Naive thymus-derived CD4-positive, alpha-beta T cell (primary cell): ENCODE measurements at regions of chr7 and their contacts with region 1.

Region 1: GRCh38 chr7:105876091-105876963 is at the start of gene ATXN7L1:
- DNase-seq: peak; percentile 75 to 94 (median 87)
- ATAC-seq: peak; percentile 99
- H3K4me3 ChIP-seq: peak within 1 kb of the TSS; percentile 97
- H3K4me3 Mint-ChIP-seq: peak within 1 kb of the TSS; percentile 90 to 100 (median 99)
- H3K27ac ChIP-seq: peak within 1 kb of the TSS; percentile 81
- H3K27ac Mint-ChIP-seq: peak within 1 kb of the TSS; percentile 85 to 99 (median 98)
- H3K4me1 ChIP-seq: peaks cover 10 to 33% of the 10 kb centered on the region in 2 donors
- H3K4me1 Mint-ChIP-seq: peaks cover 34 to 73% (median 52%) of the 10 kb centered on the region in 7 donors
- H3K27me3 ChIP-seq: no peaks in the 10 kb centered on the region
- H3K27me3 Mint-ChIP-seq: peaks cover 0 to 34% (median 0%) of the 10 kb centered on the region in 5 donors
- total RNA-seq, gene ATXN7L1: 18.5 to 52.4 (median 46.7) TPM

Region 2: GRCh38 chr7:105652359-105652993 is 223.9 kb before region 1 on chr7:
- CTCF ChIA-PET with region 1: interaction called, 3 read pairs
- POLR2A ChIA-PET with region 1: interaction called, 4 read pairs
- intact Hi-C with region 1: loop called (anchors 1 to 5 kb)
- DNase-seq: peak; percentile 34 to 68 (median 58)
- ATAC-seq: peak; percentile 82
- H3K4me3 ChIP-seq: no peak overlapping the region
- H3K4me3 Mint-ChIP-seq: no peak overlapping the region
- H3K27ac ChIP-seq: no peak overlapping the region
- H3K27ac Mint-ChIP-seq: peak overlapping the region in 2 of 9 donors; percentile 27 to 59
- H3K4me1 ChIP-seq: peaks cover 0 to 5% of the 10 kb centered on the region in 2 donors
- H3K4me1 Mint-ChIP-seq: peaks cover 9 to 24% (median 14%) of the 10 kb centered on the region in 7 donors
- H3K27me3 ChIP-seq: no peaks in the 10 kb centered on the region
- H3K27me3 Mint-ChIP-seq: no peaks in the 10 kb centered on the region

Region 3: GRCh38 chr7:105759670-105760550 is 116.4 kb before region 1 on chr7:
- CTCF ChIA-PET with region 1: interaction called, 28 read pairs
- POLR2A ChIA-PET with region 1: interaction called, 6 read pairs
- intact Hi-C with region 1: loop called (anchors 1 to 2 kb)
- DNase-seq: peak in 2 of 9 donors; percentile 21 to 24
- ATAC-seq: peak; percentile 52
- H3K4me3 ChIP-seq: no peak overlapping the region
- H3K4me3 Mint-ChIP-seq: peak overlapping the region in 8 of 10 donors; percentile 1 to 82 (median 54)
- H3K27ac ChIP-seq: no peak overlapping the region
- H3K27ac Mint-ChIP-seq: peak overlapping the region in 8 of 9 donors; percentile 32 to 90 (median 76)
- H3K4me1 ChIP-seq: peaks cover 31 to 32% of the 10 kb centered on the region in 2 donors
- H3K4me1 Mint-ChIP-seq: peaks cover 22 to 53% (median 43%) of the 10 kb centered on the region in 7 donors
- H3K27me3 ChIP-seq: no peaks in the 10 kb centered on the region
- H3K27me3 Mint-ChIP-seq: peaks cover 0 to 11% (median 0%) of the 10 kb centered on the region in 5 donors

Region 4: GRCh38 chr7:105896407-105896911 is 20.1 kb after region 1 on chr7:
- CTCF ChIA-PET with region 1: interaction called, 7 read pairs
- POLR2A ChIA-PET with region 1: interaction called, 6 read pairs
- intact Hi-C with region 1: loop called in 1 of 2 experiments (anchors 2 kb)
- DNase-seq: peak in 3 of 9 donors; percentile 21 to 37 (median 36)
- ATAC-seq: peak; percentile 71
- H3K4me3 ChIP-seq: no peak overlapping the region
- H3K4me3 Mint-ChIP-seq: peak overlapping the region in 2 of 10 donors; percentile 24 to 38
- H3K27ac ChIP-seq: no peak overlapping the region
- H3K27ac Mint-ChIP-seq: peak overlapping the region in 1 of 9 donors; percentile 63
- H3K4me1 ChIP-seq: peaks cover 3 to 21% of the 10 kb centered on the region in 2 donors
- H3K4me1 Mint-ChIP-seq: peaks cover 0 to 57% (median 37%) of the 10 kb centered on the region in 7 donors
- H3K27me3 ChIP-seq: no peaks in the 10 kb centered on the region
- H3K27me3 Mint-ChIP-seq: peaks cover 0 to 15% (median 0%) of the 10 kb centered on the region in 5 donors

Region 5: DNA sequence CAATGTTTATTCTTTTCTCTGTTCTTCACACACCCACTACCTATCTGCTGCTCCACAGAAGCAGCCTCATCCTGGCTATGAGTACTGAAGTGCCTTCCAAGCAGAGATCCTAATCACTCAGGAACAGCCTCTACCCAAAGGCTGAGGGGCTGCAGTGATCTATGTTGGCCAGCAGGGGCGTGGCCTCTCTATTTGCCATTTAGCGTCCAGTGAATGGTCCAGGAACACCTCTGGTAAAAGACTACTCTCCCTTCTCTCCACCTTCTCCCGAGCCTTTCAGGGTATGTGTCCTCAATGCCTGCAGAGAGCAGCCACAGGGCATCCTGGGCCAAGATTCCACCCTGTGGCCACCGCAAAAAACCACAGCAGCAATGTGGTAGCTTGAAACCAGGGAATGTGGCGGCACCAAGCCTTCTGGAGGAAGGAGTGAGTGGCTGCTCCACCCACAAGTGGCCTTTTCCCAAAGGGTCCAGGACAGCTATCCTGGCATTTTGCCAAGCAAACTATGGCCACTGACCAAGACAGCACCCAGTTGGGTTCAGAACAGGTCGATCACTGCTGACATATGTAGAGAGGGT is 164.9 kb after region 1 on chr7:
- CTCF ChIA-PET with region 1: interaction called, 9 read pairs
- POLR2A ChIA-PET with region 1: interaction called, 4 read pairs
- intact Hi-C with region 1: loop called in 1 of 2 experiments (anchors 1 kb)
- DNase-seq: peak in 3 of 9 donors; percentile 22 to 32 (median 25)
- ATAC-seq: peak; percentile 56
- H3K4me3 ChIP-seq: no peak overlapping the region
- H3K4me3 Mint-ChIP-seq: peak overlapping the region in 8 of 10 donors; percentile 5 to 68 (median 58)
- H3K27ac ChIP-seq: no peak overlapping the region
- H3K27ac Mint-ChIP-seq: peak overlapping the region in 8 of 9 donors; percentile 32 to 91 (median 73)
- H3K4me1 ChIP-seq: peaks cover 5 to 33% of the 10 kb centered on the region in 2 donors
- H3K4me1 Mint-ChIP-seq: peaks cover 18 to 58% (median 38%) of the 10 kb centered on the region in 7 donors
- H3K27me3 ChIP-seq: no peaks in the 10 kb centered on the region
- H3K27me3 Mint-ChIP-seq: peaks cover 0 to 48% (median 0%) of the 10 kb centered on the region in 5 donors